Calu3 (cell line): ENCODE measurements at regions of chr19 and their contacts with region 1.

Region 1: DNA sequence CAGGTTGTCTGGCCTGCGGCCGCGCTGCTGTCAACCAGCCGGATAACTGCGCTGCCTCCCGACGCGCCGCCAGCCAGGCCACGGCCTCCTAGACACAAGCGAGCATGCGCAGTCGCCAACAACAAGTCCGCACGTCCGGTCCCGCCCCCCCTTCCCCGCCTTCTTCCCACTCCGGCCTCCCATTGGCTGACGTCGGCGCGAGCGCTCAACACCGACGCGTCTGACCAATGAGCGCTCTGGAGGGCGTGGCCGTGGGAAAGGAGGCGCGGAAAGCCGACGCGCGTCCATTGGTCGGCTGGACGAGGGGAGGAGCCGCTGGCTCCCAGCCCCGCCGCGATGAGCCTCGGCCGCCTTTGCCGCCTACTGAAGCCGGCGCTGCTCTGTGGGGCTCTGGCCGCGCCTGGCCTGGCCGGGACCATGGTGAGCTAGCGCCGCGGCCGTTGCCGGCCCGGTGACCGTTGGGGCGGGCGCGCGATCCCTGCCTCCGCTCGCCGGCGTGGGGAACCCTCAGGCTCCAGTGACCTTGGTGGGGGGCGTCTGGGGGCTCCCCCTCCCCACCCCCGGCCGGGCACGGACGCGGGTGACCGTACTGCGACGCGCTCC is at the start of gene GPX4:
- DNase-seq: peak; percentile 94
- H3K4me3 Mint-ChIP-seq: peak within 1 kb of the TSS; percentile 50
- H3K27ac Mint-ChIP-seq: peak within 1 kb of the TSS; percentile 44
- H3K4me1 Mint-ChIP-seq: peaks cover 4% of the 10 kb centered on the region
- H3K27me3 Mint-ChIP-seq: no peaks in the 10 kb centered on the region
- CTCF ChIP-seq: no peak
- total RNA-seq, gene GPX4: 246 and 251 TPM in 2 replicates

Region 2: GRCh38 chr19:1183534-1184172 is 79.8 kb after region 1 on chr19:
- CTCF ChIA-PET with region 1: no interaction called
- intact Hi-C with region 1: loop called (anchors 5 kb)
- DNase-seq: peak; percentile 91
- H3K4me3 Mint-ChIP-seq: peak overlapping the region; percentile 30
- H3K27ac Mint-ChIP-seq: peak overlapping the region; percentile 79
- H3K4me1 Mint-ChIP-seq: peaks cover 31% of the 10 kb centered on the region
- H3K27me3 Mint-ChIP-seq: no peaks in the 10 kb centered on the region
- CTCF ChIP-seq: no peak